WTC11 (cell line): ENCODE measurements at regions of chr2 and their contacts with region 1.

Region 1: GRCh38 chr2:217943446-217944389 is 59.1 kb downstream of the TNS1 start:
- DNase-seq: peak; percentile 81
- ATAC-seq: peak; percentile 94
- H3K4me3 Mint-ChIP-seq: peak overlapping the region; percentile 46
- H3K27ac Mint-ChIP-seq: no peak overlapping the region
- H3K4me1 Mint-ChIP-seq: peaks cover 24% of the 10 kb centered on the region
- H3K27me3 Mint-ChIP-seq: no peaks in the 10 kb centered on the region; the same call in 1 of the 2 replicates
- CTCF ChIP-seq: no peak

Region 2: GRCh38 chr2:217899231-217900009 is 44.3 kb before region 1 on chr2:
- CTCF ChIA-PET with region 1: interaction called, 10 read pairs
- POLR2A ChIA-PET with region 1: no interaction called
- DNase-seq: peak; percentile 89
- ATAC-seq: peak; percentile 97
- H3K4me3 Mint-ChIP-seq: no peak overlapping the region
- H3K27ac Mint-ChIP-seq: no peak overlapping the region
- H3K4me1 Mint-ChIP-seq: peaks cover 19% of the 10 kb centered on the region; the same call in 1 of the 2 replicates
- H3K27me3 Mint-ChIP-seq: no peaks in the 10 kb centered on the region
- CTCF ChIP-seq: peak; percentile 75

Region 3: GRCh38 chr2:217956586-217957457 is 13.1 kb after region 1 on chr2:
- CTCF ChIA-PET with region 1: interaction called, 13 read pairs
- POLR2A ChIA-PET with region 1: interaction called, 11 read pairs
- DNase-seq: no peak
- ATAC-seq: no peak
- H3K4me3 Mint-ChIP-seq: no peak overlapping the region
- H3K27ac Mint-ChIP-seq: no peak overlapping the region
- H3K4me1 Mint-ChIP-seq: peaks cover under 1% of the 10 kb centered on the region
- H3K27me3 Mint-ChIP-seq: no peaks in the 10 kb centered on the region; the same call in 1 of the 2 replicates
- CTCF ChIP-seq: no peak

Region 4: DNA sequence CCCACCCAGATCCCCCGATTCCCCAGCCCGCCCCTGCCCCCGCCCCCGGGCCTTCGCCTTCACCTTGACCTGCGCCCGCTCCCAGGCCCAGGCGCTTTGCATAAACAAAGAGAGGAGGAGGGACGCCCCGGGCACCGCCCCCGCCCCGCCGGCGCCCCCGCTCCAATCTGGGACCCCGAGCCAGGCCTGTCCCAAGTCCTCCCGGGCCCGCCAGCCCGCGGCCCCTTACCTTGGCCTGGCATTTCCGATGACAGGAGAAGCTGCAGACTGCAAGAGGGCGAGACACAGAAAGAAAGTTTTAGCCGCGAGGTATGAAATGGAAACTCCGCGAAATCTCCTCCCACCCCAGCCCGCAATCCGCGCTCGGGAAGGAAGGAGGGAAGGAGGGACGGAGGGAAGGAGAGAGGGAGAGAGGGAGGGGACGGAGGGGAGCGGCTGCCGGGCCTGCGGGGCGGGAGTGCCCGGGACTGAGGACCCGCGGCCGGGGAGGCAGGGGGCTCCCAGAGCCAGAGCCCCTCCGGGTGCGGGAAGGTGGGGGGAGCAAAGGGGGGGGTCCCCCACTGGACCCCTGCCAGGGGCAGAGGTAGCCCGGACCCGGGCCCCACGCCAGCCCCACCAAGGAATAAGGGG is 34.9 kb after region 1 on chr2:
- CTCF ChIA-PET with region 1: interaction called, 12 read pairs
- POLR2A ChIA-PET with region 1: no interaction called
- DNase-seq: peak; percentile 80
- ATAC-seq: peak; percentile 81
- H3K4me3 Mint-ChIP-seq: no peak overlapping the region; the same call in none of the 2 replicates
- H3K27ac Mint-ChIP-seq: 0 out of 2 replicates have a peak overlapping the region, but pooled peaks have one; percentile 53
- H3K4me1 Mint-ChIP-seq: peaks cover 12% of the 10 kb centered on the region
- H3K27me3 Mint-ChIP-seq: peaks cover 9% of the 10 kb centered on the region
- CTCF ChIP-seq: no peak

Region 5: DNA sequence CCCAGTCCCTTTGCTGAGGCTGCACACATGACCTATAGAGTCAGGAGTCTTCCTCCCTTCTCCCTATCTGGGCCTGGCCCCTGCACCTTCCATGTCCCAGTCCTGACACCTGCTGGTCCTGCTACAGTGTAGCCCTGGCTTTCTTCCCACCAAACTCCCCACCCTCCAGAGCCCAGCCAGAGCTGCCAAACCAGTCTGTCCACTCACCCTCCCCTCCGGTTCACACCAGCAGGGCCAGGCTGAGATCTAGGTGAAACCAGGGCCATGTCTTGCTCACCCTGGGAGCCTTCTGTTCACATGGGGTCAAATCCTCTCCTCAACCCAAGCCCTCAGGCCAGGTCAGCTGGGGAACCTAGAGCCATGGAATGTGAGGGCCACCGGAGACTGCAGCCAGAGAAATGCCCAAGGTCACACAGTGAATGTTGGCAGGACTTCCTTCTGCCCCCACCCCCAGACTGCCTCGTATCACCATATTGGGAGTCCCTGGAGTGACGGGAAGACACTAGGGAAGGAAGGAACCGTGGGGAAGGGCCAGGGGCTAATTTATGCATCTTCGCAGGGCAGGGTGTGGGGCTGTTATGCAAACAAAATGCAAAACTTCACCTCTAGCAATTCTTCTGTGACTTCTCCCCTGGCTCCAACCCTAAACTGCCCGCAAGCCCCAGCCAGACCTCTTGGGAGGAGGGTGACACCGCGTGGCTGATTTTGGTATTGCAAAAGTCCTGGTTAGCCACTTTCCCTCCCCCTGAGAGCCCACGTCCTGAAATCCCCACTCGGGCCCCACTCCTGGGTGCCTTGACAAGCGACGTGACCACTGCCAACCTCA is 44.5 kb after region 1 on chr2:
- CTCF ChIA-PET with region 1: interaction called, 27 read pairs
- POLR2A ChIA-PET with region 1: no interaction called
- DNase-seq: peak; percentile 92
- ATAC-seq: peak; percentile 94
- H3K4me3 Mint-ChIP-seq: peak overlapping the region; percentile 65
- H3K27ac Mint-ChIP-seq: peak overlapping the region; percentile 98
- H3K4me1 Mint-ChIP-seq: peaks cover 17% of the 10 kb centered on the region
- H3K27me3 Mint-ChIP-seq: no peaks in the 10 kb centered on the region
- CTCF ChIP-seq: peak; percentile 89